Natural killer cell (primary cell): ENCODE measurements at regions of chr3 and their contacts with region 1.

Region 1: GRCh38 chr3:151918253-151919029 is 45.0 kb downstream of the SUCNR1 start:
- DNase-seq: peak in 1 of 2 donors; percentile 64
- ATAC-seq: peak in 2 of 3 donors; percentile 65 to 72
- H3K4me3 ChIP-seq: no peak overlapping the region
- H3K4me3 Mint-ChIP-seq: no peak overlapping the region
- H3K27ac ChIP-seq: no peak overlapping the region
- H3K27ac Mint-ChIP-seq: no peak overlapping the region
- H3K4me1 ChIP-seq: no peaks in the 10 kb centered on the region
- H3K4me1 Mint-ChIP-seq: no peaks in the 10 kb centered on the region
- H3K27me3 ChIP-seq: no peaks in the 10 kb centered on the region
- H3K27me3 Mint-ChIP-seq: no peaks in the 10 kb centered on the region
- CTCF ChIP-seq: peak; percentile 78

Region 2: DNA sequence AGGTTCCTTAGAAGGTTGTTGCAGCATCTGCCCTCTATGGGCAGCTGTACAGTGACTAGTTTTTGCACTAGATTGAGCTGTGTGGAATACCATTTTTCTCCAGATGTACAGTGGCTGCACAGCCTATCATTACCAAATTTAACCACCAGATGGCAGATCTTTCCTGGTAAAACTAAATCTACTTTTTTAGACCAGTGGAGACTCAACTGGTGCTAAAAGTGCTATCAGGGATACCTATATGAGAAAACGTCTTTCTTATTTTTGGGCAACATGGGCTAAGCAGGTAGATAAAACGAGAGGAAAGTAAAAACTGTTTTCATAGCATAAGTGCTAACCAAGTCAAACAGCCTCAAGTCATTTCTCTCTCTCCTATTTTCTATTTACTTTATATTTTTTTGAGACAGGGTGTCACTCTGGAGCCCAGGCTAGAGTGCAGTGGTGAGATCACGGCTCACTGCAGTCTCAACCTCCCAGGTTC is 478.8 kb before region 1 on chr3:
- intact Hi-C with region 1: loop called (anchors 1 kb)
- DNase-seq: peak in 1 of 2 donors; percentile 61
- ATAC-seq: peak; percentile 55 to 70 (median 60)
- H3K4me3 ChIP-seq: no peak overlapping the region
- H3K4me3 Mint-ChIP-seq: no peak overlapping the region
- H3K27ac ChIP-seq: no peak overlapping the region
- H3K27ac Mint-ChIP-seq: no peak overlapping the region
- H3K4me1 ChIP-seq: no peaks in the 10 kb centered on the region
- H3K4me1 Mint-ChIP-seq: no peaks in the 10 kb centered on the region
- H3K27me3 ChIP-seq: no peaks in the 10 kb centered on the region
- H3K27me3 Mint-ChIP-seq: peaks cover 0 to under 1% of the 10 kb centered on the region in 2 donors
- CTCF ChIP-seq: peak; percentile 66

Region 3: GRCh38 chr3:151468284-151468917 is 450.0 kb before region 1 on chr3:
- intact Hi-C with region 1: loop called (anchors 1 kb)
- DNase-seq: peak in 1 of 2 donors; percentile 75
- ATAC-seq: peak; percentile 50 to 80 (median 75)
- H3K4me3 ChIP-seq: no peak overlapping the region
- H3K4me3 Mint-ChIP-seq: no peak overlapping the region
- H3K27ac ChIP-seq: no peak overlapping the region
- H3K27ac Mint-ChIP-seq: no peak overlapping the region
- H3K4me1 ChIP-seq: no peaks in the 10 kb centered on the region
- H3K4me1 Mint-ChIP-seq: no peaks in the 10 kb centered on the region
- H3K27me3 ChIP-seq: no peaks in the 10 kb centered on the region
- H3K27me3 Mint-ChIP-seq: peaks cover 0 to 10% of the 10 kb centered on the region in 2 donors
- CTCF ChIP-seq: peak; percentile 86

Region 4: GRCh38 chr3:151835751-151836550 is 82.5 kb before region 1 on chr3:
- intact Hi-C with region 1: no loop called
- DNase-seq: no peak
- ATAC-seq: no peak
- H3K4me3 ChIP-seq: no peak overlapping the region
- H3K4me3 Mint-ChIP-seq: no peak overlapping the region
- H3K27ac ChIP-seq: no peak overlapping the region
- H3K27ac Mint-ChIP-seq: no peak overlapping the region
- H3K4me1 ChIP-seq: peaks cover 3% of the 10 kb centered on the region
- H3K4me1 Mint-ChIP-seq: no peaks in the 10 kb centered on the region
- H3K27me3 ChIP-seq: no peaks in the 10 kb centered on the region
- H3K27me3 Mint-ChIP-seq: peaks cover 24 to 30% of the 10 kb centered on the region in 2 donors
- CTCF ChIP-seq: no peak

Region 5: GRCh38 chr3:152051501-152052404 is 133.3 kb after region 1 on chr3:
- intact Hi-C with region 1: no loop called
- DNase-seq: no peak
- ATAC-seq: no peak
- H3K4me3 ChIP-seq: no peak overlapping the region
- H3K4me3 Mint-ChIP-seq: no peak overlapping the region
- H3K27ac ChIP-seq: no peak overlapping the region
- H3K27ac Mint-ChIP-seq: no peak overlapping the region
- H3K4me1 ChIP-seq: no peaks in the 10 kb centered on the region
- H3K4me1 Mint-ChIP-seq: no peaks in the 10 kb centered on the region
- H3K27me3 ChIP-seq: peaks cover 3% of the 10 kb centered on the region
- H3K27me3 Mint-ChIP-seq: peaks cover 8 to 21% of the 10 kb centered on the region in 2 donors
- CTCF ChIP-seq: no peak